ENCODE measurements at regions of chr16 and their contacts with region 1.

Region 1: DNA sequence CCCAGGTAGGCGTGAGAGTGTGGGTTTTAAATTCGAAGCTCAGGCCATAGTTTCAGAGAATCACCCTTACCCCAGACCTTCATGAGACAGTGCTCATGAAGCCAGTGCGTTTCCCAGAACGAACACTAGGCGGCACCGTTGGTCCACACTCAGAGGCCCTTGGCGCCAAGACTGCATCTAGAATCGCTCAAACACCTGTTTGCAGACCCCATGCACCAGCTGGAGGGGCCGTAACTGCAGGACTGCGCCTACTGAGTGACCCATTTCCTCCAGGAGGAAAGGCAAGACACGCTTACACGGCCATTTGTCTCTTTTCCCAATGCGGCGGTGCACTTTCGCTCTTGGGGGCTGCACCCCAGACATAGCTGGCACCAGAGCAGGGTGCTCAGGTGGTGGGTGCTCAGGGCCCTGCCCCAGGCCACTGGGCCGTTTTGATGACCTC is 34.0 kb downstream of the ADGRG5 start:
- DNase-seq: peak; percentile 87
- H3K4me3 Mint-ChIP-seq: no peak overlapping the region
- H3K27ac Mint-ChIP-seq: peak overlapping the region; percentile 85
- H3K4me1 Mint-ChIP-seq: peaks cover 58% of the 10 kb centered on the region
- H3K27me3 Mint-ChIP-seq: peaks cover 3% of the 10 kb centered on the region

Region 2: GRCh38 chr16:57503366-57503765 is 73.1 kb before region 1 on chr16:
- CTCF ChIA-PET with region 1: no interaction called
- POLR2A ChIA-PET with region 1: no interaction called
- DNase-seq: no peak
- H3K4me3 Mint-ChIP-seq: no peak overlapping the region
- H3K27ac Mint-ChIP-seq: no peak overlapping the region
- H3K4me1 Mint-ChIP-seq: peaks cover 11% of the 10 kb centered on the region
- H3K27me3 Mint-ChIP-seq: no peaks in the 10 kb centered on the region

Region 3: DNA sequence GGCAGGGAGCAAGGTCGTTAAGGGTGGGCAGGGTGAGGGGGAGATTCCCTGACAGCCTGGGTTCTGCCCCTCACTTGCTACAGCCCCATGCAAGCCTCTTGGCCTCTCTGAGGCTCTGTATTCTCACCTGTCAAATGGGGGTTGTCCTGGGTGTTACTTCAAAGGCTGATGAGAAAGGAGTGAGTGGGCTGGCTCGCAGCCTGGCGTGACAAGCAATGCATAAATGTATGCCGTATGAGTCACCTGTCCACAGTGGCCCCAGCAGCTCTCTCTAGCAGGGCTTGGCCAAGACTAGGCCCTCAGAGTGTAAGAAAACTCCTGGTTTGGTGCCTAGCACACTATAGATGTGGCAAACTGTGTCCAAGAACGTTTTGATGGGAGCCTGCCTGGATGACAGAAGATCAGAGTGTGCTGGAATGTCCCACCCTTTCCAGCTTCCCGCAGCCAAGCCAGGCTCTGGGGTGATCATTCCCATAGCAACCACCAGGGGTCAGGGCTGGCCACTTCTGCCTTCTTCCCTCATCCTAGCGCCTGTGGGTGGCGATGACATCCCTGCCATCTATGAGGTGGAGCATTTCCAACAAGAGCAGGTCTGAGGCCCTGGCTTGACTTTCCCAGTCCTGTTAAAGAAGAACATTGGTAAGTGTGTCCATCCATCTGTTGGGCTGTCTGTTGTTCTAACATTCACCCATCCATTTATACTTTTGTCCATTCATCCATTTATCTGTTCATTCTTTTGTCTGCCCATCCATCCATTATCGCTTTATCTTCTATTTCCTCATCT is 14.8 kb after region 1 on chr16:
- CTCF ChIA-PET with region 1: interaction called, 140 read pairs
- POLR2A ChIA-PET with region 1: interaction called, 23 read pairs
- DNase-seq: peak; percentile 78
- H3K4me3 Mint-ChIP-seq: peak overlapping the region; percentile 61
- H3K27ac Mint-ChIP-seq: peak overlapping the region; percentile 91
- H3K4me1 Mint-ChIP-seq: peaks cover 57% of the 10 kb centered on the region
- H3K27me3 Mint-ChIP-seq: peaks cover 3% of the 10 kb centered on the region

Region 4: GRCh38 chr16:57609541-57610401 is 33.3 kb after region 1 on chr16:
- CTCF ChIA-PET with region 1: interaction called, 55 read pairs
- POLR2A ChIA-PET with region 1: interaction called, 21 read pairs
- DNase-seq: peak; percentile 81
- H3K4me3 Mint-ChIP-seq: peak overlapping the region; percentile 40
- H3K27ac Mint-ChIP-seq: peak overlapping the region; percentile 89
- H3K4me1 Mint-ChIP-seq: peaks cover 63% of the 10 kb centered on the region
- H3K27me3 Mint-ChIP-seq: peaks cover 2% of the 10 kb centered on the region

Region 5: GRCh38 chr16:57653936-57654335 is 77.5 kb after region 1 on chr16:
- CTCF ChIA-PET with region 1: interaction called, 189 read pairs
- POLR2A ChIA-PET with region 1: interaction called, 25 read pairs
- DNase-seq: no peak
- H3K4me3 Mint-ChIP-seq: no peak overlapping the region
- H3K27ac Mint-ChIP-seq: no peak overlapping the region
- H3K4me1 Mint-ChIP-seq: peaks cover 26% of the 10 kb centered on the region
- H3K27me3 Mint-ChIP-seq: no peaks in the 10 kb centered on the region

Region 6: GRCh38 chr16:57700781-57701551 is 124.5 kb after region 1 on chr16:
- CTCF ChIA-PET with region 1: no interaction called
- POLR2A ChIA-PET with region 1: no interaction called
- DNase-seq: no peak
- H3K4me3 Mint-ChIP-seq: no peak overlapping the region
- H3K27ac Mint-ChIP-seq: no peak overlapping the region
- H3K4me1 Mint-ChIP-seq: peaks cover 2% of the 10 kb centered on the region
- H3K27me3 Mint-ChIP-seq: peaks cover 10% of the 10 kb centered on the region

Region 7: GRCh38 chr16:58000706-58001676 is 424.5 kb after region 1 on chr16 and contains the start of gene USB1:
- CTCF ChIA-PET with region 1: interaction called, 22 read pairs
- POLR2A ChIA-PET with region 1: interaction called, 3 read pairs
- DNase-seq: peak; percentile 87
- H3K4me3 Mint-ChIP-seq: peak within 1 kb of the TSS; percentile 92
- H3K27ac Mint-ChIP-seq: peak within 1 kb of the TSS; percentile 94
- H3K4me1 Mint-ChIP-seq: peaks cover 58% of the 10 kb centered on the region
- H3K27me3 Mint-ChIP-seq: no peaks in the 10 kb centered on the region
- total RNA-seq, gene USB1: 48.4 to 54.2 TPM

Measured in activated CD4-positive, alpha-beta memory T cell treated with anti-CD3 and anti-CD28 coated beads, Interleukin-2, amount 10 ng/mL, durations not matched to agents 7 days and 5 days (primary cell).